Heart right ventricle (tissue), 16 donors: ENCODE measurements at regions of chr1 and their contacts with region 1.

Region 1: GRCh38 chr1:230441183-230442029 is 15.3 kb upstream of the PGBD5 start:
- DNase-seq: no peak
- ATAC-seq: no peak
- H3K4me3 ChIP-seq: no peak overlapping the region
- H3K27ac ChIP-seq: no peak overlapping the region
- H3K4me1 ChIP-seq: no peaks in the 10 kb centered on the region
- H3K27me3 ChIP-seq: peaks cover 0 to 14% (median 5%) of the 10 kb centered on the region in 7 donors
- CTCF ChIP-seq: no peak

Region 2: DNA sequence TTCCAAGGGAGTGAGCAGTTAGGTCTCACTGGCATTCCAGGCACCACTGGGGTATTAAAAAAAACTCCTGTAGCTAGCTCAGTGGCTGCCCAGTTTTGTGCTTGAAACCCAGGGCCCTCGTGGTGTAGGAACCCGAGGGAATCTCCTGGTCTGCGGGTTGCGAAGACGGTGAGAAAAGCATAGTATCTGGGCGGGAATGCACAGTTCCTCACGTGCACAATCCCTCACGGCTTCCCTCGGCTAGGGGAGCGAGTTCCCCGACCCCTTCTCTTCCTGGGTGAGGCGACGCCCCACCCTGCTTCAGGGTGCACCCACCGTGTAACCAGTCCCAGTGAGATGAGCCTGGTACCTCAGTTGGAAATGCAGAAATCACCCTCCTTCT is 35.2 kb after region 1 on chr1:
- intact Hi-C with region 1: loop called in 1 of 10 experiments (anchors 2 kb)
- DNase-seq: no peak
- ATAC-seq: no peak
- H3K4me3 ChIP-seq: no peak overlapping the region
- H3K27ac ChIP-seq: no peak overlapping the region
- H3K4me1 ChIP-seq: no peaks in the 10 kb centered on the region
- H3K27me3 ChIP-seq: peaks cover 0 to 22% (median 10%) of the 10 kb centered on the region in 7 donors
- CTCF ChIP-seq: no peak